Body of pancreas (tissue), 4 donors: ENCODE measurements at regions of chr1 and their contacts with region 1.

Region 1: DNA sequence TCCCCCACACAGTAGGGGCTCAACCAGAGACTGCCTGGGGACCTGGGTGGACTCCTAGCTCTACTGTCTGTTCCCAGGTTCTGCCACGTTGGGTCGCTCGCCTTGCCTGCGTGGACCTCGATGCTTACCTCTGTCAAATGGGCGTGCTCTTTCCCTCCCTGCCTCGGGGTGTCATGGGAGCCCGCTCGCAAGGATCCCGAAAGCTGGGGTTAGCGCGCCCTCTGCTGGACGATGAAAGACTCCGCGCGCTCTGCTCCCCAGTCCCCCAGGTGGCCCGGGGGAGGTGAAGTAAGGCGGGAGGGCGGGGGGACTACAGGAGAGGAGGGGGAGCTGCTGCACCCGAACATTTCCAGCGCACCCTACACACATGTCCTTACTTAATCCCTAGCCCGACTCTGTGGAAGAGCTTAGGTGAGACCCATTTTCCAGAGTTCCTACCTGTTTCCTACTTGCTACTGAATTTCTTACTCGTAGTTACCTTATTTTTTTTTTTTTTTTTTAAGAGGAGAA is 2.3 kb upstream of the BSND start:
- DNase-seq: peak; percentile 65 to 78 (median 76)
- ATAC-seq: peak; percentile 78
- H3K4me3 ChIP-seq: no peak overlapping the region
- H3K27ac ChIP-seq: no peak overlapping the region
- H3K4me1 ChIP-seq: peaks cover 11% of the 10 kb centered on the region
- H3K27me3 ChIP-seq: peaks cover 0 to 9% of the 10 kb centered on the region in 2 donors
- CTCF ChIP-seq: peak; percentile 77 to 88 (median 82)
- POLR2A ChIP-seq: no peak

Region 2: GRCh38 chr1:54950369-54951163 is 45.8 kb before region 1 on chr1:
- intact Hi-C with region 1: loop called (anchors 5 kb)
- DNase-seq: peak; percentile 72 to 82 (median 80)
- ATAC-seq: peak; percentile 83
- H3K4me3 ChIP-seq: no peak overlapping the region
- H3K27ac ChIP-seq: no peak overlapping the region
- H3K4me1 ChIP-seq: peaks cover 10% of the 10 kb centered on the region
- H3K27me3 ChIP-seq: no peaks in the 10 kb centered on the region
- CTCF ChIP-seq: peak; percentile 58 to 89 (median 84)
- POLR2A ChIP-seq: no peak